ENCODE measurements at regions of chrX and their contacts with region 1.

Region 1: GRCh38 chrX:24054182-24055042 is at the start of gene EIF2S3:
- DNase-seq: peak; percentile 89
- H3K4me3 Mint-ChIP-seq: no peak within 1 kb of the TSS
- H3K27ac Mint-ChIP-seq: no peak within 1 kb of the TSS
- H3K4me1 Mint-ChIP-seq: no peaks in the 10 kb centered on the region
- H3K27me3 Mint-ChIP-seq: no peaks in the 10 kb centered on the region
- CTCF ChIP-seq: peak; percentile 48
- total RNA-seq, gene EIF2S3: 255 and 277 TPM in 2 replicates

Region 2: DNA sequence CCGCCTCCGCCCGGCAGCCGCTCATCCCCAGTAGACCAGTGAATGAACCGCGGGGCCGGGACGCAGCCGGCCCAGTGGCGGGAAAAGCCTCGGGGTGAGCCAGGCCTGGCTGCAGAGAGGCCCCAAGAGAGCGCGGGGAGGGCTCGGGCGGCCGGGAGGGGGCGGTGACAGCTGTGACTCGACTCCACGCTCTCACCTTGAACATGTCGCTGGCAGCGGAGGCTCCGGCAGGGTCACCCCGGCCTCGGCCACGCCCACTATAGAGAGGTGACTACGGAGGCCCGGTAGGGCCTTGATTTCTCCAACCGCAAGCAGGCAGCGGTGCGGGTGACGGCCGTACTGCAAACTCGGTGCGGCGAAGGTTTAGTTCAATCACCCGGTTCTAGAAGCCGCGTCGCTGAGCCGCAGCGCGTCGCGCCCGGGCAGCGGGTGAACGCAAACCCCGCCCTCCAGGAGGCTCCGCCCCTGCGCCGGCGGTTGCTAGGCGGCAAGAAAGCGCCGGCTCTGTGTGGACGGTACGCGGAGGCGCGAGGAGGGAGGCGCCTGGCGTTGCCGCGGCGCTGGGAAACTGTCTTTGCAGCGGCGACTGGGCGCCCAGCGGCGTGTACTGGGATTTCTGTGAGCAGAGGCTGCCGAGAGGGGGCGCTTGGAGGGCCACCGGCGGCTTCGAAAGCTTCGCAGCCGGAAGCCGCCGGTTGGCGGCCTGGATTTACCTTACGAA is 146.8 kb before region 1 on chrX and contains the starts of genes APOO and CXorf58:
- CTCF ChIA-PET with region 1: interaction called, 22 read pairs
- intact Hi-C with region 1: loop called (anchors 2 kb)
- DNase-seq: peak; percentile 95
- H3K4me3 Mint-ChIP-seq: peak within 1 kb of the TSS; percentile 74
- H3K27ac Mint-ChIP-seq: no peak within 1 kb of the TSS
- H3K4me1 Mint-ChIP-seq: peaks cover 12% of the 10 kb centered on the region
- H3K27me3 Mint-ChIP-seq: no peaks in the 10 kb centered on the region
- CTCF ChIP-seq: peak; percentile 63
- total RNA-seq, gene APOO: 46.8 and 50.0 TPM in 2 replicates
- total RNA-seq, gene CXorf58: not detected in 2 replicates

Region 3: DNA sequence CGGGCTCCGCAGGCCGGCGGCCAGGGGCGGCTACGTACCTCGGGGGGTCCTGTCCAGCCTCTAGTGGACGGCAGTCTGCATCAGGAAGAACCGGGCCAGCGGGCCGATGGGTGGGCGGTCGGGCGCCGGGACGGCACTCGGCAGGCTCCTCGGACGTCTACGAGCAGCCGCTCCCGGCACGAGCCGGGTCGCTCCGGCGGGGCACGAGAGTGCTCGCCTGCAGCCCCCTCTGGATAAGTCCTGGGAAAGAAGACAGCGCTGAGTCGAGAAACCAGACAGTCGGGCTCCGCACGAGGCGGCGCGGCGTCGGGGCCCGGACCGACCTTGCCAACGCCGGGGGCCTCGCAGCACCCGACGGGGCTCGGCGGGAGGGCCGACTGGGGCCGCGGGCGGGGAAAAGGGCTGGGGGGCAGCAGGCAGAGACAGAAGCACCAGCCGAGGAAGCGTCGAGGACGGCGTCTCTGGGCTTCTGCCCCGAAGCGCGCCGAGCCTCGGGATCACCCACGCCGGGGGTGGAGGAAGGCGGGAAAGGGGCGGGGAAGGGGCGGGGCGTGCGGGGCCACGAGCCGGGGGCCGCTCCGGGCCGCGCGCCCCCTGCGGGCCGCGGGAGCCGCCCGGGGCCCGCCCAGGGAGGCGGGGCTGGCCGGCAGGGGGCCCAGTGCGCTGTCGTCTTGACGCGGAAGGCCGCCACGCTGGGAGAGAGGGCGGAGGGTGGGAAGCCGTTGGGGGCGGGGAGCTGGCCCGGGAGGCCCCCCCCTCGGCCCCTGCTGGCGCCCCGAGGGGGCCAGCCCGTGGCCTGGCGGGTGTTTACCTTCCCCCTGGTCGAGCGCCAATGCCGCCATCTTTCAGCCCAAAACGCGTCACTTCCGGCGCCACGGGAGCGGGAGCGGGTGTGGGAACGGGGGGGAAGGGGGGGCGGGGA is 29.3 kb before region 1 on chrX:
- CTCF ChIA-PET with region 1: interaction called, 14 read pairs
- intact Hi-C with region 1: no loop called
- DNase-seq: peak; percentile 79
- H3K4me3 Mint-ChIP-seq: peak overlapping the region; percentile 65
- H3K27ac Mint-ChIP-seq: no peak overlapping the region
- H3K4me1 Mint-ChIP-seq: peaks cover 8% of the 10 kb centered on the region
- H3K27me3 Mint-ChIP-seq: no peaks in the 10 kb centered on the region
- CTCF ChIP-seq: no peak

Measured in Calu3 (cell line).